Transverse colon (tissue), 4 donors: ENCODE measurements at regions of chr19 and their contacts with region 1.

Region 1: GRCh38 chr19:9934132-9934950 is 2.0 kb downstream of the OLFM2 start:
- DNase-seq: peak; percentile 74
- H3K4me3 ChIP-seq: no peak overlapping the region
- H3K27ac ChIP-seq: no peak overlapping the region
- H3K4me1 ChIP-seq: peaks cover 3 to 24% (median 10%) of the 10 kb centered on the region in 4 donors
- H3K27me3 ChIP-seq: peaks cover 57% of the 10 kb centered on the region
- CTCF ChIP-seq: peak; percentile 75 to 86 (median 82)
- EP300 ChIP-seq: no peak
- POLR2A ChIP-seq: no peak

Region 2: GRCh38 chr19:10027158-10027693 is 92.9 kb after region 1 on chr19:
- in situ Hi-C with region 1: loop called in 3 of 4 experiments (anchors 5 to 10 kb)
- intact Hi-C with region 1: loop called (anchors 1 kb)
- DNase-seq: no peak
- H3K4me3 ChIP-seq: no peak overlapping the region
- H3K27ac ChIP-seq: no peak overlapping the region
- H3K4me1 ChIP-seq: peaks cover 0 to 9% (median 7%) of the 10 kb centered on the region in 4 donors
- H3K27me3 ChIP-seq: peaks cover 23% of the 10 kb centered on the region
- CTCF ChIP-seq: no peak
- EP300 ChIP-seq: no peak
- POLR2A ChIP-seq: no peak